Activated T-helper 1 cell treated with anti-CD3 and anti-CD28 coated beads, Interleukin-12 subunit alpha, Interleukin-12 subunit beta, Interleukin-2, Interleukin-4 antibody, amounts not matched to agents 30 ng/mL and 10 ng/mL and 1 ng/mL, durations not matched to agents 14 hours and 24 hours and 36 hours (primary cell): ENCODE measurements at regions of chr11 and their contacts with region 1.

Region 1: GRCh38 chr11:115504276-115505158 is at the start of gene CADM1:
- DNase-seq: peak; percentile 34
- H3K4me3 Mint-ChIP-seq: peak within 1 kb of the TSS; percentile 61
- H3K27ac Mint-ChIP-seq: no peak within 1 kb of the TSS
- H3K4me1 Mint-ChIP-seq: peaks cover 6% of the 10 kb centered on the region
- H3K27me3 Mint-ChIP-seq: peaks cover 29% of the 10 kb centered on the region
- total RNA-seq, gene CADM1: not detected in 2 replicates

Region 2: DNA sequence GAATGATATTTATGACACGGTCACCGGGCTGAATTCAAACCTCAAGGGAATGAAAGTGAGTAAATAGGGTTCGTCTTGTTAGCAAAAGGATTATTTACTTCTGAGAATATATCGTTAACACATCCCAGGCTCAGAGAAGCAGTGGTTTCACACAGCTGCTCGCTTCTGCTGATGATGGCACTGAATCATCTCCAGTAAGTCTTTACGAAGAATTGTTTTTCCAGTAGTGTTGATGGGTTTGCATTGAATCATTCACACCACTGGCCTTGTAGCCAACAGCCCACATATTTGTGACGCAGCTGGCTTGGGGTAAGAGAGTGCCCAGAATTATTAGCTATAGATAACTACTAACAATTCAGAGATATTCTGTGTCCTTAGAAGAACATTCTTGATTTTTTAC is 236.6 kb before region 1 on chr11:
- intact Hi-C with region 1: no loop called
- DNase-seq: no peak
- H3K4me3 Mint-ChIP-seq: no peak overlapping the region
- H3K27ac Mint-ChIP-seq: no peak overlapping the region
- H3K4me1 Mint-ChIP-seq: no peaks in the 10 kb centered on the region
- H3K27me3 Mint-ChIP-seq: peaks cover 4% of the 10 kb centered on the region

Region 3: DNA sequence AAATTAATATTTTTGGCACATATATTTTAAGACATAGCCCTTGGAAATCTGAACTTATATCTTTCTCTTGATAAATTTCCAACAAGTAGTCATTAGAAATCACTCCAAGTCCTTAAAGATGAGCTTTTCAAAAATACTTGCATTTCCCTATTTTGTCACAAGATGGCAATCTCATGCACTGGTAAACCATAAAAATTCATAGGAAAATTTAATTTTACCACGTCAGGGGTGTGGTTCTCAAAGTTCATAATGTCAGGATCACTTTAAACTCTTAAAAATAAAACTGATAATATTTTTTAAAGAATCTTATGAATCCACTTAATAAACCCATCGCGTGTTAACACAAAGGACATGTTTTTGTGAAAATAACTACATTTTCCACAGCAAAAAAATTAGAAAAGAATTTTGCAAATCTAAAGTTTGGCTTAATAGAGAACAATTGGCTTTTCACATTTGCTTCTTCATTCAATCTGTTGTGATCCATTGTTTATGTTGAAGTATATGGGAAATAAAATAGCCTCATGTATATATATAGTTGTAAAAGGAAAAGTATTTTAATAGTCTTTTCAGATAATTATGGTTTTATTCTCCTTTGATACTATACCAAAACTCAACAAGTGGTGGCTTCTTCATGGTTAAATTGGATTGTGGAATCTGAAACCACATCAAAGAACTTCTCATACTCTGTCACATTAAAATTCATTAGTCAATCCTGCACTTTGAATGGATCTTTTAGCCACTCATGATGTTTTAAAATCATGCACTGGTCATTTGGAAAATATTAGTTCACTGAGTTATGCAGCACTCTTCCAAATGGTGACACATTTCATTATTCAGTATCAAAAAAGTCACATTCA is 169.4 kb before region 1 on chr11:
- intact Hi-C with region 1: loop called (anchors 5 kb)
- DNase-seq: no peak
- H3K4me3 Mint-ChIP-seq: no peak overlapping the region
- H3K27ac Mint-ChIP-seq: no peak overlapping the region
- H3K4me1 Mint-ChIP-seq: no peaks in the 10 kb centered on the region
- H3K27me3 Mint-ChIP-seq: no peaks in the 10 kb centered on the region

Region 4: GRCh38 chr11:115530752-115531151 is 26.2 kb after region 1 on chr11:
- intact Hi-C with region 1: no loop called
- DNase-seq: no peak
- H3K4me3 Mint-ChIP-seq: no peak overlapping the region
- H3K27ac Mint-ChIP-seq: no peak overlapping the region
- H3K4me1 Mint-ChIP-seq: no peaks in the 10 kb centered on the region
- H3K27me3 Mint-ChIP-seq: peaks cover 4% of the 10 kb centered on the region

Region 5: GRCh38 chr11:116579857-116580727 is 1075.6 kb after region 1 on chr11:
- intact Hi-C with region 1: loop called (anchors 10 kb)
- DNase-seq: no peak
- H3K4me3 Mint-ChIP-seq: no peak overlapping the region
- H3K27ac Mint-ChIP-seq: no peak overlapping the region
- H3K4me1 Mint-ChIP-seq: no peaks in the 10 kb centered on the region
- H3K27me3 Mint-ChIP-seq: peaks cover 43% of the 10 kb centered on the region